H1 (cell line): ENCODE measurements at regions of chr22 and their contacts with region 1.

Region 1: DNA sequence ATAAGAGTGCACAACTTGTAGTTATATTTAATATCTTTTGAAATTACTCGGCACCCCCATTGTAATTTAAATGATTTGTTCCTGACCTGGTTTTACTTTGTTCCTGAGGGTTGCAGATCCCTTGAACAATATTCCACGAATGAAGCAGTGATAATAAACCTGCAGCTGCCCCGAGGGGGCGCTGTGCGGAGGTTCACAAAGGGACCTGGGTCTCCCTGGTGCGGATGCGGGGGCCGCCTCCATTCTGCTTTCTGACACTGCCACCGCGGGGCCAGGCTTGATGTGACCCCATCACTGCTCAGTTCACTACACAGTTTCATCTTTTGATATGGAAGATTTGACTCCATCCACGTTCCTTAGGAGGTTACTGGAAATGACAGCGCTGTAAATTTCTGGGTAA is 62.9 kb upstream of the PRODH start:
- DNase-seq: peak; percentile 34 to 92
- H3K4me3 ChIP-seq: no peak overlapping the region
- H3K27ac ChIP-seq: no peak overlapping the region
- H3K4me1 ChIP-seq: peaks cover 0 to 4% (median 0%) of the 10 kb centered on the region in 4 experiments; a peak in 1 of 7 replicates
- H3K27me3 ChIP-seq: 0 out of 7 replicates have a peak, but pooled peaks cover 0 to 3% (median 0%) of the 10 kb centered on the region in 4 experiments
- CTCF ChIP-seq: peak; percentile 83 to 96 (median 84)
- EP300 ChIP-seq: no peak
- POLR2A ChIP-seq: no peak
- RAD21 ChIP-seq: peak; percentile 63 to 74

Region 2: GRCh38 chr22:18947905-18948304 is 51.1 kb before region 1 on chr22:
- CTCF ChIA-PET with region 1: interaction called, 13 read pairs
- POLR2A ChIA-PET with region 1: interaction called, 5 read pairs
- DNase-seq: no peak
- H3K4me3 ChIP-seq: no peak overlapping the region
- H3K27ac ChIP-seq: peak overlapping the region; percentile 34; the same call in 1 of the 2 replicates
- H3K4me1 ChIP-seq: peaks cover 0 to 8% (median 7%) of the 10 kb centered on the region in 4 experiments; a peak in 5 of 7 replicates
- H3K27me3 ChIP-seq: no peaks in the 10 kb centered on the region
- CTCF ChIP-seq: no peak
- EP300 ChIP-seq: no peak
- POLR2A ChIP-seq: peak in 1 of 2 experiments; percentile 73; a peak in 1 of 3 replicates
- RAD21 ChIP-seq: no peak

Region 3: DNA sequence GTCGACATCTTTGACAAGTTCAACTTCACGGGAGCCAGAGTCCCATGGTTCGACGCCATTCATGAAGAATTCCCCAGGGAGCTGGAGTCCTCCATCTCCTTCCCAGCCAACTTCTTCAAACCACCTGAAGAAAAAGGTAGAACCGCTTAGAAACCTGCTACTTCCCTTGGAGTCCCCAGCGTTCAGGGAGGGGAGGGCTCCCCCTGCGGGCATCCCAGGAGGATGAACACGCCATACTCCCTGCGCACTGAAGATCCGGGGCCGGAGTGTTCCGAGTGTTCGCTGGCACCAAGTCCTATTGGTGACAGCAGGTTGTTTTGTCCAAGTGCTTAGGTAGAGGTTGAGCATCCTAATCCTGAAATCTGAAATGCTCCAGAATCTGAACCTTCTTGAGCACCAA is 11.2 kb before region 1 on chr22:
- CTCF ChIA-PET with region 1: interaction called, 14 read pairs
- POLR2A ChIA-PET with region 1: no interaction called
- DNase-seq: peak; percentile 43 to 78
- H3K4me3 ChIP-seq: no peak overlapping the region
- H3K27ac ChIP-seq: no peak overlapping the region
- H3K4me1 ChIP-seq: no peaks in the 10 kb centered on the region
- H3K27me3 ChIP-seq: no peaks in the 10 kb centered on the region
- CTCF ChIP-seq: peak; percentile 68 to 73 (median 69)
- EP300 ChIP-seq: no peak
- POLR2A ChIP-seq: no peak
- RAD21 ChIP-seq: peak; percentile 66 to 68

Region 4: DNA sequence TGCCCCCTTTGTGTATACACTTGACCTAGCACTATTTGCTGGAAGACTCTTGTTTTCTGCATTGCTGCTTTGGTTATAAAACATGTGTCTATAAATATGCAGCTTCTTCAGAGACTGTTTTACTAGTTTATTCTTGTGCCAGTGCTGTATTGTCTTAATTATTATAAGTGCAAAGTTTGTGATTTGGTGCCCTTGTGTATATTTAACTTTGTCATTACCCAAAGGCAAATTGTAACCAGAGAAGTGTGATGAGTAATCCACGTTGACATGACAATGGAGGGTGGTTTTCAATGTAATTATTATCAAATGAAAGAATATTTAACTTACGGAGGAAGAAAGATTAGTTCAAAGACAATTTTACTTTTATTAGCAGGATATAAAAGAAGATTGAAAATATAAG is 12.1 kb after region 1 on chr22:
- CTCF ChIA-PET with region 1: interaction called, 19 read pairs
- POLR2A ChIA-PET with region 1: interaction called, 3 read pairs
- DNase-seq: no peak
- H3K4me3 ChIP-seq: no peak overlapping the region
- H3K27ac ChIP-seq: no peak overlapping the region
- H3K4me1 ChIP-seq: no peaks in the 10 kb centered on the region; a peak in 1 of 7 replicates
- H3K27me3 ChIP-seq: no peaks in the 10 kb centered on the region; a peak in 1 of 7 replicates
- CTCF ChIP-seq: no peak
- EP300 ChIP-seq: no peak
- POLR2A ChIP-seq: no peak
- RAD21 ChIP-seq: no peak

Region 5: GRCh38 chr22:19016081-19016766 is 17.2 kb after region 1 on chr22:
- CTCF ChIA-PET with region 1: interaction called, 19 read pairs
- POLR2A ChIA-PET with region 1: no interaction called
- DNase-seq: peak in 1 of 2 experiments; percentile 39
- H3K4me3 ChIP-seq: no peak overlapping the region
- H3K27ac ChIP-seq: no peak overlapping the region
- H3K4me1 ChIP-seq: peaks cover 0 to 3% (median 0%) of the 10 kb centered on the region in 4 experiments; a peak in 2 of 7 replicates
- H3K27me3 ChIP-seq: no peaks in the 10 kb centered on the region; a peak in 2 of 7 replicates
- CTCF ChIP-seq: no peak
- EP300 ChIP-seq: no peak
- POLR2A ChIP-seq: no peak
- RAD21 ChIP-seq: no peak

Region 6: GRCh38 chr22:19036523-19037273 is 37.7 kb after region 1 on chr22:
- CTCF ChIA-PET with region 1: interaction called, 14 read pairs
- POLR2A ChIA-PET with region 1: no interaction called
- DNase-seq: no peak
- H3K4me3 ChIP-seq: no peak overlapping the region
- H3K27ac ChIP-seq: no peak overlapping the region
- H3K4me1 ChIP-seq: no peaks in the 10 kb centered on the region; a peak in 1 of 7 replicates
- H3K27me3 ChIP-seq: no peaks in the 10 kb centered on the region; a peak in 1 of 7 replicates
- CTCF ChIP-seq: peak; percentile 44 to 58 (median 53)
- EP300 ChIP-seq: no peak
- POLR2A ChIP-seq: no peak
- RAD21 ChIP-seq: peak; percentile 31 to 47; a peak in 3 of 4 replicates

Region 7: DNA sequence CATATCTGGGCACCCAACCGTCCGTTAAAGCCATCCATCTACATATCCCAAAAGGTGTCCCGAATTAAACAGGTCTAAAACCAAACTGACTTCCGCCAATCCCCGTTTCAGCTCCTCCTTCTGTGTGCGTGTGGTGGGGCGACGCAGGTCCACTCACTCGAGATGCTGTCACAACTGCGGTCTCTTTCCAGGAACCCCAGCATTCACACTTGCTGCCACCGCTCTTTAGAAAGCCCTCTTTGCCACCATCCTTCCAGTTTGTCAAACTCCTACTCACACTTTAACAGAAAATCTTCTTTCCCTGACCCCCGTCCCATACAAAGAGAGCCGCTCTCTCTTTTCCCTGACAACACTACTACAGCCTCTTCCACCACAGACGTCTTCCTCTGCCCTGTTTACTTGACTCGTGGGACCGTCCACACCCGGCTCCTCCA is 145.0 kb after region 1 on chr22:
- CTCF ChIA-PET with region 1: no interaction called
- POLR2A ChIA-PET with region 1: no interaction called
- DNase-seq: no peak
- H3K4me3 ChIP-seq: peak overlapping the region; percentile 47 to 94 (median 92)
- H3K27ac ChIP-seq: 0 out of 2 replicates have a peak overlapping the region, but pooled peaks have one; percentile 59
- H3K4me1 ChIP-seq: peaks cover 0 to 12% (median 5%) of the 10 kb centered on the region in 4 experiments; a peak in 5 of 7 replicates
- H3K27me3 ChIP-seq: peaks cover 16 to 29% (median 22%) of the 10 kb centered on the region in 4 experiments
- CTCF ChIP-seq: no peak
- EP300 ChIP-seq: no peak
- POLR2A ChIP-seq: no peak
- RAD21 ChIP-seq: no peak